Activated CD4-positive, alpha-beta T cell treated with anti-CD3 and anti-CD28 coated beads, Interleukin-2, amount 10 ng/mL, durations not matched to agents 24 days and 14 days (primary cell): ENCODE measurements at regions of chr5 and their contacts with region 1.

Region 1: DNA sequence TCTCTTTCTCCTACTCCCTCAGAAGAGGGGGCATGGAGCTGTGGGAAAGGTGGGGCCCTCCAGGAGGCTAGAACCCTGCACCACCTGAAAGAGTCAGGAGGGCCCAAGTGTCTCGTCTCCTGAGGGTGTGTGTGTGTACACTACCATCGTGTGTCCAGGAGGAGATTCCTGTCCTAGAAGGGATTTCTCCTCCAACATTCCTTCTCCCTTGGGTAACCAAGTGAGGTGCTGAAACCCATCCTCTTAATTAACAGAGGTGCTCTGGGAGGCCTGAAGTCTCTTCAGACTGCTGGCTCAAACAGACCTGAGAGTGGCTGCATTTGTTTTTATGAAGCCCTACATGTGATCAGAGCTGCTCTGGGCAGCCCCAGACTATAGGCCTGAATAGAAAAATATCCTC is 61.1 kb upstream of the FAM169A start:
- DNase-seq: no peak
- H3K4me3 Mint-ChIP-seq: no peak overlapping the region
- H3K27ac Mint-ChIP-seq: no peak overlapping the region
- H3K4me1 Mint-ChIP-seq: no peaks in the 10 kb centered on the region
- H3K27me3 Mint-ChIP-seq: peaks cover 2% of the 10 kb centered on the region

Region 2: GRCh38 chr5:75265731-75266130 is 338.4 kb after region 1 on chr5:
- intact Hi-C with region 1: loop called (anchors 5 kb)
- DNase-seq: no peak
- H3K4me3 Mint-ChIP-seq: no peak overlapping the region
- H3K27ac Mint-ChIP-seq: no peak overlapping the region
- H3K4me1 Mint-ChIP-seq: no peaks in the 10 kb centered on the region
- H3K27me3 Mint-ChIP-seq: peaks cover 8% of the 10 kb centered on the region